ENCODE measurements at regions of chr5 and their contacts with region 1.

Region 1: DNA sequence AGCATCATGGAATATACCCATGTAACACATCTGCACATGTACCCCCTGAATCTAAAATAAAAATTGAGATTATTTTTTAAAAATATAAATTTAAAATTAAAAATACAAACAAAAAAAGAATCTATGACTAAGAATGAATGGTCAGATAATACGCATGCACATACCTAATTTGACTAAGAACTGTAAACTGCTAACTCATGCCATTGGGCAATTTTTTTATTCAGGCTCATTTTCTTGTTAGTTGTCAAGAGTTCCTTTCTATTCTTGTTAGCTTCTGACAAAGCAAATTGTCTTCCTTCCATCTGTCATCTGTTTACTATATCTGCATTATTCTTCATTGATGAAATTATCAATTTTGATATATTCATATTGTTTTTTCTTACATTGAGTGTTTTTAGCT is 69.5 kb upstream of the HAND1 start:
- DNase-seq: no peak
- H3K4me3 ChIP-seq: no peak overlapping the region
- H3K27ac ChIP-seq: no peak overlapping the region
- H3K4me1 ChIP-seq: no peaks in the 10 kb centered on the region
- H3K27me3 ChIP-seq: no peaks in the 10 kb centered on the region
- CTCF ChIP-seq: no peak

Region 2: DNA sequence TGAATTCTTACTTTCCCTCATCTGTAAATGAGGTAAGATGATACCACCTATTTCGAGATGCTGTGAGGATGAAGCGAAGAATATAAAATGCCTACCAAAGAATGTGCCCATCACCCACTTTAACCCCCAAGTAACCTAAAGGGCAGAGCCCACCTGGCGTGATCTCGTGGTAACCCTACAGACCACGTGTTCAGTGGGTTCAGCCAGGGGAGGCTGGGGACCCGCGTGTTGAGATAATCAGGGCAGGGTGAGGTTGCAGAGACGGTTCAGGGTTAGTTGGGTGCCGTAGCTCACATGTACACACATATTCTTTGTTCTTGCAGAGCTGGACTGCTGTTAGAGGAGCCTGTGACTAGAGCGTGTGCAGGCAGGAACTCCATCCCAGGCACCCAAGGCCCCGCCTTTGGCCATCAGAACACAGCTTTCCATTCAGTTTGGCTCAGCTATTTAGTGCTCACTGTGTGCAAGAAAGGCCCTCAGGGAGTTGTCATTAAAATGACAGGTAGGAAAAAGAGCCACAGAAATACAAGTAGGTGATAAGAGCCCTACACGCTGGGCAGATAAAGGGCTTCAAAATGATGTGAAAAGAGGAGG is 13.0 kb before region 1 on chr5:
- CTCF ChIA-PET with region 1: no interaction called
- POLR2A ChIA-PET with region 1: interaction called, 10 read pairs
- intact Hi-C with region 1: no loop called
- DNase-seq: no peak
- H3K4me3 ChIP-seq: no peak overlapping the region
- H3K27ac ChIP-seq: no peak overlapping the region
- H3K4me1 ChIP-seq: no peaks in the 10 kb centered on the region
- H3K27me3 ChIP-seq: peaks cover 8% of the 10 kb centered on the region; the same call in 1 of the 2 replicates
- CTCF ChIP-seq: no peak

Region 3: GRCh38 chr5:154801083-154801482 is 253.5 kb after region 1 on chr5:
- CTCF ChIA-PET with region 1: no interaction called
- POLR2A ChIA-PET with region 1: no interaction called
- intact Hi-C with region 1: no loop called
- DNase-seq: no peak
- H3K4me3 ChIP-seq: no peak overlapping the region
- H3K27ac ChIP-seq: no peak overlapping the region
- H3K4me1 ChIP-seq: peaks cover 11% of the 10 kb centered on the region; the same call in 1 of the 2 replicates
- H3K27me3 ChIP-seq: no peaks in the 10 kb centered on the region
- CTCF ChIP-seq: no peak